Transverse colon (tissue), 4 donors: ENCODE measurements at regions of chr4 and their contacts with region 1.

Region 1: DNA sequence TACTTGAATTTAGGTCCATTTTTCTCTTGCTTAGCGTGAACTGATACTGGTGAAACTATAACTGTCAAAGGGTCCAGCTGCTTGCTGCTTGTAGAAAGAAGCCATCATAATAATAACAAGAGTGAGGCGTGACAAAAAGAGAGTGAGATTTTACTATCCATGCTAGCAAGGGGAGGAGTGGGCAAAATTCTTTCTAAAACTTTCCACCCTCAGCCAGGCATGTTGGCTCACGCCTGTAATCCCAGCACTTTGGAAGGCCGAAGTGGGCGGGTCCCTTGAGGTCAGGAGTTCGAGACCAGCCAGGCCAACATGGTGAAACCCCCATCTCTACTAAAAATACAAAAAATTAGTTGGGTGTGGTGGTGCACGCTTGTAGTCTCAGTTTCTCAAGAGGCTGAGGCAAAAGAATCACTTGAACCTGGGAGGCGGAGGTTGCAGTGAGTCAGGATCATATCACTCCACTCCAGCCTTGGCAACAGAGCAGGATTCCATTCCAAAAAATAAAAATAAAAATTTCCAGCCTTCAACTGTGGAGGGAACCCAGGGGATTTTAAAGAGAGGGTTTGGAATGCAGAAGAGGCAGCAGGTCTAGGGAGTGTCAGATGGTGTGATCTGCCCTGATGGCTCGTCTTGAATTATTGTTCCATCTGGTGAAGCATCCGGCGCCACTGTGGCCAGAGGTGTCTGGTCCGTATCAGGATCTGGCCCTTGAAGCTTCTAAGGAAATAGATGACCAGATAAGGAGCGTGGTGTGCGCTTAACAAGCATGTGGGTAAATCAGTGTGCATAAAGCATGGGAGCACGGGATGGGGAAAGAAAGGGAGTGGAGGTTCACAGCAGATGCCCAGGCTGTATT is 51.8 kb downstream of the LRP2BP start:
- DNase-seq: peak; percentile 25
- H3K4me3 ChIP-seq: no peak overlapping the region
- H3K27ac ChIP-seq: peak overlapping the region; percentile 55 to 80 (median 62)
- H3K4me1 ChIP-seq: peaks cover 0 to 7% (median 2%) of the 10 kb centered on the region in 4 donors
- H3K27me3 ChIP-seq: no peaks in the 10 kb centered on the region
- CTCF ChIP-seq: no peak
- EP300 ChIP-seq: peak; percentile 62
- POLR2A ChIP-seq: no peak

Region 2: GRCh38 chr4:185209031-185209851 is 134.7 kb before region 1 on chr4 and contains the start of gene SNX25:
- in situ Hi-C with region 1: no loop called
- intact Hi-C with region 1: loop called (anchors 10 kb)
- DNase-seq: peak; percentile 90
- H3K4me3 ChIP-seq: peak within 1 kb of the TSS; percentile 63 to 89 (median 76)
- H3K27ac ChIP-seq: peak within 1 kb of the TSS; percentile 88 to 95 (median 94)
- H3K4me1 ChIP-seq: peaks cover 8 to 32% (median 28%) of the 10 kb centered on the region in 4 donors
- H3K27me3 ChIP-seq: no peaks in the 10 kb centered on the region
- CTCF ChIP-seq: no peak
- EP300 ChIP-seq: no peak
- POLR2A ChIP-seq: peak; percentile 33
- total RNA-seq, gene SNX25: 17.1 to 68.5 (median 19.5) TPM

Region 3: DNA sequence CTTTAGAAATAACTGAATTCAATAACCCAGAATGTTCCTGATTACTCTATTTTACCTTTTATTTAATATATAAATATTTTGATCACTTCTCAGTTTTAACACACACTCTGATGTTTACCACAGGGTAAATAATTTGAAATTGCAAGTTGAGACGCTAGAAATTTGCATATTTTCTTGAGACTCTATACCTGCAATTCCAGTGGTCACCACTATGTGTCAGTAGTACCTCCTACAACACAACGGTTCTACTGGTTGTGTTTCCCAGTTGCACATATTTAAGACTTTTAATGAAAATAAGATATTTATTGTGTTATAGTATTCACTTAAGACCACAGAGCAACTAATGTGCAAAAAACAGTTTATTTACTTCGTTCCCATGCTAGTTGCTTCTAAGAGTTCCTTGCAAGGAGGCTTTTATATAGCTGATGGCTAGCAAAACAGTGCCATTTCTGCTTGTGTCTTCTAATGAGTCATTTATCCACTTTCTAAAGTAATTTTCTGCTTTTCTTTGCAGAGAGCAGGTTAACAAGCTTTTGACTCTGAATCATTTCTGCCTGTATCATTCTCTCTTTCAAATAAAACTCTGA is 290.2 kb after region 1 on chr4:
- in situ Hi-C with region 1: no loop called
- intact Hi-C with region 1: no loop called
- DNase-seq: no peak
- H3K4me3 ChIP-seq: no peak overlapping the region
- H3K27ac ChIP-seq: no peak overlapping the region
- H3K4me1 ChIP-seq: no peaks in the 10 kb centered on the region
- H3K27me3 ChIP-seq: no peaks in the 10 kb centered on the region
- CTCF ChIP-seq: peak; percentile 27 to 57 (median 40)
- EP300 ChIP-seq: no peak
- POLR2A ChIP-seq: no peak